RWPE1 (cell line): ENCODE measurements at regions of chr1 and their contacts with region 1.

Region 1: DNA sequence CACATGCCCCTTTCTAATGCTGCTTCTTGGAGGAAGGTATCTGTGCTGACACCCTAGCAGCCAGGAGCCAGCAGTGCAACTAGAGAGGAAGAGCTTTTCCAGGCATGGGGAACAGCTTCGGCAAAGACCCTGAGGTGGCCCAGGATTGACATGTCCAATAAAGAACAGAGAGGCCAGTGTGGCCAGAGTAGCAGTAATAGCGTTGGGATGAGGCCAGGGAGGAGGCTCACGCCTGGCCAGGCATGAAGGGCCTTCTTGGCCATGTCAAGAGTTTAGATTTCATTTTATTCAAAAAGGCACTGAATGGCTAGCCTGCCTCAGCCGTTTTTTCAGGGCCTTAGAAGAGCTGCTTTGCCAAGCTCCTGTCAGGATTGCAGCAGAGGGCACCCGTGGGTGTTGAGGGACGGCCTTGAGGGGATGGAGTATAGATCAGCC is 16.3 kb upstream of the ADAMTSL4 start:
- DNase-seq: no peak
- H3K27ac ChIP-seq: peak overlapping the region; percentile 93
- CTCF ChIP-seq: peak; percentile 39; the same call in 1 of the 2 replicates

Region 2: GRCh38 chr1:150561974-150562445 is 29.1 kb after region 1 on chr1:
- CTCF ChIA-PET with region 1: interaction called, 15 read pairs
- POLR2A ChIA-PET with region 1: no interaction called
- DNase-seq: peak; percentile 88
- H3K27ac ChIP-seq: peak overlapping the region; percentile 100
- CTCF ChIP-seq: no peak

Region 3: GRCh38 chr1:150579799-150580642 is 47.1 kb after region 1 on chr1:
- CTCF ChIA-PET with region 1: no interaction called
- POLR2A ChIA-PET with region 1: no interaction called
- DNase-seq: no peak
- H3K27ac ChIP-seq: peak overlapping the region; percentile 98
- CTCF ChIP-seq: no peak

Region 4: GRCh38 chr1:150642296-150642695 is 109.4 kb after region 1 on chr1:
- CTCF ChIA-PET with region 1: no interaction called
- POLR2A ChIA-PET with region 1: no interaction called
- DNase-seq: no peak
- H3K27ac ChIP-seq: no peak overlapping the region
- CTCF ChIP-seq: no peak